Activated CD8-positive, alpha-beta T cell treated with anti-CD3 and anti-CD28 coated beads for 36 hours (primary cell): ENCODE measurements at regions of chr15 and their contacts with region 1.

Region 1: DNA sequence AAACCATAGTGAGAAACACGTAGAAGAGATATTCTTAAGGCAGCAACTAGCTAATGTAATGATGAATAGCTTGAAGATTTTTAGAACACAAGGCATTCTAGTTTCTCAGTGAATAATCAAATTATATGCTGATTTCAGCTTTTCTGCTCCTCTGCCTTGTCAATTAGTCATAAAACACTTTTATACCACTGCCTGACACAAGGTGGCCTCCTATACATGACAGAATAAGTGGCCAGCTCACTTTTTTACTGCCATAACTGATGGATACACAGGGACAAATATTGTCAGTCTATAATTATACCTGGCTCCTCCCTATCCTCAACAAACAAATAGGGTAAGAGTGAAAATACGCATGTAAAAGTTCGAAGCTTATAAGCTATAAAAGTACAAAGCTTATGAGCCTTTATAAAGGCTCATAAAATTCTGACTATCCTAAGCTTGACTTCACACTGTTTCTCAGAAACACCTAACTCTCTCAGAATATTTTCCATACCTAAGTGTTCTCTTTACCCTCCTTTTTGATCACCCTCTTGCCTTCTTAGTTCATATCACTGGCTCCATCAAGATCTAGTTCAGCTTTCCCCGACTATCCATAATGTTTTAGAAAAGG is 81.6 kb downstream of the HERC1 start:
- DNase-seq: peak; percentile 60
- ATAC-seq: peak; percentile 94
- H3K4me3 Mint-ChIP-seq: no peak overlapping the region
- H3K27ac Mint-ChIP-seq: peak overlapping the region; percentile 46
- H3K4me1 Mint-ChIP-seq: peaks cover 6% of the 10 kb centered on the region
- H3K27me3 Mint-ChIP-seq: no peaks in the 10 kb centered on the region
- CTCF ChIP-seq: peak; percentile 80

Region 2: GRCh38 chr15:63763476-63764123 is 11.4 kb after region 1 on chr15:
- CTCF ChIA-PET with region 1: interaction called, 24 read pairs
- POLR2A ChIA-PET with region 1: no interaction called
- intact Hi-C with region 1: no loop called
- DNase-seq: no peak
- ATAC-seq: peak; percentile 96
- H3K4me3 Mint-ChIP-seq: no peak overlapping the region
- H3K27ac Mint-ChIP-seq: peak overlapping the region; percentile 46
- H3K4me1 Mint-ChIP-seq: peaks cover 58% of the 10 kb centered on the region
- H3K27me3 Mint-ChIP-seq: no peaks in the 10 kb centered on the region
- CTCF ChIP-seq: no peak

Region 3: GRCh38 chr15:63860155-63860554 is 108.0 kb after region 1 on chr15:
- CTCF ChIA-PET with region 1: interaction called, 11 read pairs
- POLR2A ChIA-PET with region 1: interaction called, 3 read pairs
- intact Hi-C with region 1: no loop called
- DNase-seq: peak; percentile 78
- ATAC-seq: peak; percentile 74
- H3K4me3 Mint-ChIP-seq: no peak overlapping the region
- H3K27ac Mint-ChIP-seq: peak overlapping the region; percentile 85
- H3K4me1 Mint-ChIP-seq: peaks cover 35% of the 10 kb centered on the region
- H3K27me3 Mint-ChIP-seq: no peaks in the 10 kb centered on the region
- CTCF ChIP-seq: no peak

Region 4: GRCh38 chr15:63945007-63945788 is 193.0 kb after region 1 on chr15:
- CTCF ChIA-PET with region 1: interaction called, 24 read pairs
- POLR2A ChIA-PET with region 1: no interaction called
- intact Hi-C with region 1: no loop called
- DNase-seq: peak; percentile 86
- ATAC-seq: peak; percentile 98
- H3K4me3 Mint-ChIP-seq: no peak overlapping the region
- H3K27ac Mint-ChIP-seq: peak overlapping the region; percentile 3
- H3K4me1 Mint-ChIP-seq: peaks cover 8% of the 10 kb centered on the region
- H3K27me3 Mint-ChIP-seq: no peaks in the 10 kb centered on the region
- CTCF ChIP-seq: peak; percentile 91

Region 5: DNA sequence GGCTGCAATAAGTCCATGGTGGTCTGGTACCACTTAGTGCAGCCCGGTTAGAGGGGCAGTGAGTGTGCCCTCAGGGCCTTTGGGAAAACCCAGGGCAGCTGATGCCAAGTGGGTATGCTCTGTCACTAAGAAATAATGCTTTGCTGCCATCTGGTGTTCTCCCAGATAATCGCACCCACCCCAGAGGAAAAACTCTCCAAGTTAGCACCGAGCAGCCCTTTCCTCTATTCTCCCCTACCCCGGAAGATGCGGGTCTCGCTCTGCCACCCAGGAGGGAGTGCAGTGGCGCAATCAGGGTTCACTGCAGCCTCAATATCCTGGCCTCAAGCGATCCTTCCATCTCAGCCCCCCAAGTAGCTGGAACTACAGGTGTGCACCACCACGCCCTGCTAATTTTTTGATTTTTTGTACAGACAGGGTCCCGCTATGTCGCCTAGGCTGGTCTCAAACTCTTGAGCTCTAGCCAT is 315.4 kb after region 1 on chr15:
- CTCF ChIA-PET with region 1: interaction called, 95 read pairs
- POLR2A ChIA-PET with region 1: no interaction called
- intact Hi-C with region 1: loop called (anchors 5 kb)
- DNase-seq: peak; percentile 80
- ATAC-seq: peak; percentile 89
- H3K4me3 Mint-ChIP-seq: no peak overlapping the region
- H3K27ac Mint-ChIP-seq: no peak overlapping the region
- H3K4me1 Mint-ChIP-seq: peaks cover 4% of the 10 kb centered on the region
- H3K27me3 Mint-ChIP-seq: no peaks in the 10 kb centered on the region
- CTCF ChIP-seq: peak; percentile 81